Aorta (tissue), 5 donors: ENCODE measurements at regions of chr10 and their contacts with region 1.

Region 1: DNA sequence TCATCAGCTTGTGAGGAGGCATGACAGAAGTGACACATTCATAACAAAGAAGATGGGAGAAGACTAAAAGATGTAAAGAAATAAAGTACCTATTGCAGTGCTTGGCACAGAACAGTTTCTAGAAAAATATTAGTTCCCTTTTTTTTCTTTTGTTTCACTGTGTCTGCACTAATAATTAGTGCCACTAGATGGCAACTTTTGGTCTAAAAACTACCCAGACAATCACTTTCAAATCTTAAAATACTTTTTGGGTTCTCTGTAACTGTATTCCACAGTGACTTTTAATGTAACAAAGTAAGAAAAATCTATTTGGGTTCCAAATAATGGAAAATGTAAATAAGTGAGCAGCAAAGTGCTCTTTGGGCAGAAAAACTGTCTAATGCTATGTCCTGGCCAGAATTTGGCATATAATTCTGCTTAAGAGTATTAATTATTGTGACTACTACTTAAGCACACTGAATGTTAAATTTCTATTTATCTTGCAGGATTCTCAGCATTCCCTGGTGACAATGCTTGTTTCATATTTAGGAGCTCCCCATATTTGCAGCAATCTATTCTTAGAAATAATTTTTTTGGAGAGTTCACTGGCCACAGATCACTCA is 134.8 kb upstream of the KIF5B start:
- DNase-seq: no peak
- ATAC-seq: peak; percentile 71
- H3K4me3 ChIP-seq: no peak overlapping the region
- H3K27ac ChIP-seq: no peak overlapping the region
- H3K4me1 ChIP-seq: no peaks in the 10 kb centered on the region
- H3K27me3 ChIP-seq: no peaks in the 10 kb centered on the region

Region 2: GRCh38 chr10:31836569-31837406 is 354.2 kb before region 1 on chr10:
- intact Hi-C with region 1: loop called in 1 of 2 experiments (anchors 10 kb)
- DNase-seq: no peak
- ATAC-seq: no peak
- H3K4me3 ChIP-seq: no peak overlapping the region
- H3K27ac ChIP-seq: no peak overlapping the region
- H3K4me1 ChIP-seq: peaks cover 0 to 3% of the 10 kb centered on the region in 2 donors
- H3K27me3 ChIP-seq: no peaks in the 10 kb centered on the region

Region 3: GRCh38 chr10:32360243-32360642 is 169.3 kb after region 1 on chr10:
- intact Hi-C with region 1: loop called in 1 of 2 experiments (anchors 5 kb)
- DNase-seq: no peak
- ATAC-seq: no peak
- H3K4me3 ChIP-seq: no peak overlapping the region
- H3K27ac ChIP-seq: no peak overlapping the region
- H3K4me1 ChIP-seq: no peaks in the 10 kb centered on the region
- H3K27me3 ChIP-seq: no peaks in the 10 kb centered on the region